ENCODE measurements at regions of chr1 and their contacts with region 1.

Region 1: DNA sequence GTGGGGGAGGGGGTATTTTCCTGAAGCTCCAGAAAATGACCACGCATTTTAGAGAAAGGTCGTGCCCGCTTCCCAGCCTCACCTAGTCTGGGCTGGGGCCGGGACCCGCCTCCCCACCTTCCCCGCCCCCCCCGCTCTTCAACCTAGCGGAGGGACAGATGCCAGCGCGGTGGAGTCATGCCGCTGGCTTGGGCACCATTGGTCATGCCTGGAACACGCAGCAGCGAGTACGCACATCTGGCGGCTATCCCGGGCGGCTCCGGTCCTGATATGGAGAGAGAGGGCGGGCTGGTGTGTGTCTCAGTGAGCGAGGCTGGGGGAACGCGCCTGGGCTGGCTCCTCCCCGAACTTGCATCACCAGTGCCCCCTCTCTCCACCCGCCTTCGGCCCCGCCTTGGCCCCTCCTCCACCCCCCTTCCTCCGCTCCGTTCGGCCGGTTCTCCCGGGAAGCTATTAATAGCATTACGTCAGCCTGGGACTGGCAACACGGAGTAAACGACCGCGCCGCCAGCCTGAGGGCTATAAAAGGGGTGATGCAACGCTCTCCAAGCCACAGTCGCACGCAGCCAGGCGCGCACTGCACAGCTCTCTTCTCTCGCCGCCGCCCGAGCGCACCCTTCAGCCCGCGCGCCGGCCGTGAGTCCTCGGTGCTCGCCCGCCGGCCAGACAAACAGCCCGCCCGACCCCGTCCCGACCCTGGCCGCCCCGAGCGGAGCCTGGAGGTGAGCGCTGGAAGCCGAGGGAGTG is at the start of gene ATF3:
- DNase-seq: peak; percentile 98
- ATAC-seq: peak; percentile 87
- H3K4me3 ChIP-seq: peak within 1 kb of the TSS; percentile 70 to 77
- H3K27ac ChIP-seq: peak within 1 kb of the TSS; percentile 71
- H3K4me1 ChIP-seq: peaks cover 11 to 48% of the 10 kb centered on the region in 2 experiments; a peak in 3 of 4 replicates
- H3K27me3 ChIP-seq: peaks cover 21% of the 10 kb centered on the region; the same call in 1 of the 2 replicates
- CTCF ChIP-seq: no peak
- POLR2A ChIP-seq: peak; percentile 99
- RAD21 ChIP-seq: no peak; the same call in 1 of the 2 replicates
- total RNA-seq, gene ATF3: 43.2 TPM

Region 2: GRCh38 chr1:212477014-212477679 is 131.2 kb before region 1 on chr1:
- CTCF ChIA-PET with region 1: interaction called, 14 read pairs
- POLR2A ChIA-PET with region 1: interaction called, 32 read pairs
- RAD21 ChIA-PET with region 1: interaction called, 4 to 7 read pairs
- intact Hi-C with region 1: no loop called
- DNase-seq: peak; percentile 81
- ATAC-seq: peak; percentile 98
- H3K4me3 ChIP-seq: no peak overlapping the region
- H3K27ac ChIP-seq: no peak overlapping the region
- H3K4me1 ChIP-seq: peaks cover 0 to 17% of the 10 kb centered on the region in 2 experiments; a peak in 2 of 4 replicates
- H3K27me3 ChIP-seq: no peaks in the 10 kb centered on the region
- CTCF ChIP-seq: peak; percentile 89 to 96 (median 91)
- POLR2A ChIP-seq: no peak
- RAD21 ChIP-seq: peak; percentile 98

Region 3: DNA sequence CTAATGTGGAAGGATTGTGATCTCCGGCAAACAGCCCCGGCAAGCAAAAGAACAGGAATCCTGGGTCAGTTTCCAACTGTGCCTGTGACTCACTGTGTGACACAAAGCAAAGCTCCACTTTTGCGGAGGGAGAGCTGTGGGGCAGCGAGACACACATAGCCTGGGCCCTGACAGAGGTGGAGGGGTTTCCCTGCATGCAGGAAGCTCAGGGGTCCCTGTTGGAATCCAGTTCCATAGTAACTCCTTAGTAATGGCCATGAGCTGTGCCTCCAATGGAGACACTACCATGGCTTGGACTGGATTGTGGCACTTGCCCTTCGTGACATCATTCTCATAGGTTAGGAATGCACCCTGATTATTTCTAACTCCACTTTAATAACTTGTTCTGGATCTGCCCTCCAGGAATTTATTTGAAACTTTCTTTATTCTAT is 46.9 kb before region 1 on chr1:
- CTCF ChIA-PET with region 1: no interaction called
- POLR2A ChIA-PET with region 1: interaction called, 11 read pairs
- RAD21 ChIA-PET with region 1: no interaction called
- intact Hi-C with region 1: loop called (anchors 1 kb)
- DNase-seq: peak; percentile 64
- ATAC-seq: peak; percentile 76
- H3K4me3 ChIP-seq: peak overlapping the region in 1 of 2 experiments; percentile 41; a peak in 2 of 4 replicates
- H3K27ac ChIP-seq: peak overlapping the region; percentile 75
- H3K4me1 ChIP-seq: peaks cover 22 to 64% of the 10 kb centered on the region in 2 experiments
- H3K27me3 ChIP-seq: no peaks in the 10 kb centered on the region
- CTCF ChIP-seq: no peak
- POLR2A ChIP-seq: no peak
- RAD21 ChIP-seq: peak; percentile 15; the same call in 1 of the 2 replicates

Region 4: DNA sequence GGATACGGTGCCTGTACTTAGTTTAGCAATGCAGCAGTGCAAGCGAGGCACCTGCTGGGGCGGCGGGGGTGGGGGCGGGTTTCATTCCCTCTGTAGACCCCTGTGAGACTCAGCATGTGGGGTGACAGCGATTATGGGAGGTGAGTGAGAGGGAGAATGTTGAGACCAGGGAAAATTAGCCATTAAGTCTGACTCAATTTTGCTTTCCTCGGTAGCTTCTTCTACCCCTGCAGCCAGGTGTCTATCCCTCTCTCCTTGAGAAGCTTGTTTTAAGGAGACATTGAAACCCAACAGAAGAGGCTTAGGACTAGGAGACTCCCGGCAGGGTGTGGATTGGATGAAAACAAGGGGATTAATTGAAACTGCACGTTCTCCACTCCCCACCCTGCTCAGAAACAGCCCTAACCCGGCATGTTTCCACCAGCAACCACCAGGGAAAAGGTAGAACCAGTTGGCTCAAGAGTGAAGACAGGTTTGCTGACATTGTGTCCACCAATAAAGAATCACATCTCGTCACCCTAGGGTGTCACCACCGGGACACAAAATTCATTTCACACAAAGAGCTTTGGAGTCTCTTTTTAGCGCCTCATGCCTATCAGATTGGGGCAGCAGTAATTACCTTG is 20.4 kb before region 1 on chr1:
- CTCF ChIA-PET with region 1: no interaction called
- POLR2A ChIA-PET with region 1: interaction called, 10 read pairs
- RAD21 ChIA-PET with region 1: no interaction called
- intact Hi-C with region 1: no loop called
- DNase-seq: no peak
- ATAC-seq: 0 out of 2 replicates have a peak, but pooled peaks have one; percentile 49
- H3K4me3 ChIP-seq: no peak overlapping the region
- H3K27ac ChIP-seq: no peak overlapping the region
- H3K4me1 ChIP-seq: no peaks in the 10 kb centered on the region
- H3K27me3 ChIP-seq: no peaks in the 10 kb centered on the region
- CTCF ChIP-seq: no peak
- POLR2A ChIP-seq: no peak
- RAD21 ChIP-seq: no peak

Region 5: GRCh38 chr1:212621951-212622305 is 13.5 kb after region 1 on chr1:
- CTCF ChIA-PET with region 1: no interaction called
- POLR2A ChIA-PET with region 1: interaction called, 18 read pairs
- RAD21 ChIA-PET with region 1: no interaction called
- intact Hi-C with region 1: no loop called
- DNase-seq: no peak
- ATAC-seq: no peak
- H3K4me3 ChIP-seq: no peak overlapping the region
- H3K27ac ChIP-seq: no peak overlapping the region
- H3K4me1 ChIP-seq: no peaks in the 10 kb centered on the region
- H3K27me3 ChIP-seq: no peaks in the 10 kb centered on the region
- CTCF ChIP-seq: no peak
- POLR2A ChIP-seq: no peak
- RAD21 ChIP-seq: no peak